Activated CD4-positive, alpha-beta T cell treated with anti-CD3 and anti-CD28 coated beads for 36 hours (primary cell): ENCODE measurements at regions of chr21 and their contacts with region 1.

Region 1: DNA sequence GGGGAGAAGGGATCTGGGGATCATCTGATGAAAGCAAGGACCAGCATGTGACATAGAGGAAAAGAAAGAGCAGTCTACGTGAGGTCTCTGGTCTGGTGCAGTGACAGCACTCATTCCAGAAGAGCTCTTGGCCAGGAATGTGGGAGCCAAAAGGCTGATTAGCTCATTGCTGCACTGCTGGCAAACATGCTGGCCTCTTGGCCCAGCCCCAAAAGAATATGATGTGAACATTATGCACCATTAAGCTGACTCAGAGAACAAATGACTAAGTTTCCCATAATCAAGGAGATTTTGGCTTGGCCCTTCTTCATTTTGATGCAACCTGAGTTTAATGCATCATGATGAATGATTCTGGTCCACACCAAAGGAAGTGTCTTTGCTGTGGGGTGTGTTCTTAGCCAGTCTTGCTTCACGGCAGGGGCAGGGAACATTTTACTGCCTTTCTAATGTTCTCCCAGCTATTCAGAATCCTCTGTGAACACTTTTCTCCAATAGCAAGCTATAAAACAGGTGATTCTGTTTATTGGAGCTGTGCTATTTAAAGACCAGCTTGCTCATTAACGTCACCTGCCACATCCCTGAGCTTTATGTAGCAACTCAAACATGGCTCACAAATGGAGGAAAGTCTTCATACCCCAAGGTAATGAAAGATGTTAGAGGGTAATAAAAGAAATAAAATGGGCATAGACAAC is 55.1 kb downstream of the PCBP3 start:
- DNase-seq: peak; percentile 61
- ATAC-seq: peak; percentile 84
- H3K4me3 Mint-ChIP-seq: no peak overlapping the region
- H3K27ac Mint-ChIP-seq: peak overlapping the region; percentile 83
- H3K4me1 Mint-ChIP-seq: peaks cover 34% of the 10 kb centered on the region
- H3K27me3 Mint-ChIP-seq: no peaks in the 10 kb centered on the region

Region 2: DNA sequence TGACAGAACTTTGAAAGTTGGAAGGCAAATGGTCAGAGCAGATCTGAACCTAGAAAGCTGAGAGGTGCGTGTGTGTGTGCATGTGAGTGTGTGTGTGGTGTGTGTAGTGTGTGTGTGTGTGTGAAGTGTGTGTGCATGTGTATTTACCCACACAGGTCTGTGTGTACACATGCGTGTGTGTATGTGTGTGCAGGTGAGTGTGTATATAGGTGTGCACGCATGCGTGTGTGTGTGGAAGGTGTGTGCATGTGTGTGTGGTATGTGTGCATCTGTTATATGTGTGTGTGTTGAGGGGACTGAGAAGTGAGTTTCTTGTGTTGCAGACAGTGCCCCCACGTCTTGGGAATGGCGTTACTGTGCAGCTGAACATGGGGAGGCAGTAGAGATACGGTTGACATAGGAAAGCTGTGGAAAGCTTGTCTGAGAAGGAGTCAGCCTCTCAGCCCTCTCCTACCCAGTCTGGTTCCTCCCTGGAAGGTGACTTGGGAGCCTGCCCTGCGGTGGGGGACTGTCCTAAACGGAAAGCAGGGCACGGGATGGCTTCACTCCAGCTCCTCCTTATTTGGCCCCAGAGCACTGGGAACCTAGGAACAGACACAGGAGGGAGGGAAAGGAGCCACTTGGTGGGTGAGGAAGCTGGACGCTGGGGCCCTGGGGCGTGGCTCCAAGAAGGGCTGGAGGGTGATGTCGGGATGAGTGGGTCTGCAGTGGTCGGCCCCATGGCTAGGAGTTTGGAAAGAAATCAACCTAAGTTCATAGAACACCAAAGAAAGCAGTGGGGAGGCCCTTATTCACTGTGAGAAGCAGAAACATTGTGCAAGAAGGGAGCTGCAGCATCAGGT is 42.1 kb after region 1 on chr21:
- CTCF ChIA-PET with region 1: no interaction called
- POLR2A ChIA-PET with region 1: no interaction called
- intact Hi-C with region 1: no loop called
- DNase-seq: no peak
- ATAC-seq: no peak
- H3K4me3 Mint-ChIP-seq: no peak overlapping the region
- H3K27ac Mint-ChIP-seq: no peak overlapping the region
- H3K4me1 Mint-ChIP-seq: peaks cover 15% of the 10 kb centered on the region
- H3K27me3 Mint-ChIP-seq: no peaks in the 10 kb centered on the region

Region 3: GRCh38 chr21:45768751-45769070 is 70.1 kb after region 1 on chr21:
- CTCF ChIA-PET with region 1: interaction called, 4 read pairs
- POLR2A ChIA-PET with region 1: no interaction called
- intact Hi-C with region 1: loop called (anchors 1 to 2 kb)
- DNase-seq: peak; percentile 64
- ATAC-seq: peak; percentile 3
- H3K4me3 Mint-ChIP-seq: peak overlapping the region; percentile 62
- H3K27ac Mint-ChIP-seq: peak overlapping the region; percentile 98
- H3K4me1 Mint-ChIP-seq: peaks cover 57% of the 10 kb centered on the region
- H3K27me3 Mint-ChIP-seq: no peaks in the 10 kb centered on the region

Region 4: DNA sequence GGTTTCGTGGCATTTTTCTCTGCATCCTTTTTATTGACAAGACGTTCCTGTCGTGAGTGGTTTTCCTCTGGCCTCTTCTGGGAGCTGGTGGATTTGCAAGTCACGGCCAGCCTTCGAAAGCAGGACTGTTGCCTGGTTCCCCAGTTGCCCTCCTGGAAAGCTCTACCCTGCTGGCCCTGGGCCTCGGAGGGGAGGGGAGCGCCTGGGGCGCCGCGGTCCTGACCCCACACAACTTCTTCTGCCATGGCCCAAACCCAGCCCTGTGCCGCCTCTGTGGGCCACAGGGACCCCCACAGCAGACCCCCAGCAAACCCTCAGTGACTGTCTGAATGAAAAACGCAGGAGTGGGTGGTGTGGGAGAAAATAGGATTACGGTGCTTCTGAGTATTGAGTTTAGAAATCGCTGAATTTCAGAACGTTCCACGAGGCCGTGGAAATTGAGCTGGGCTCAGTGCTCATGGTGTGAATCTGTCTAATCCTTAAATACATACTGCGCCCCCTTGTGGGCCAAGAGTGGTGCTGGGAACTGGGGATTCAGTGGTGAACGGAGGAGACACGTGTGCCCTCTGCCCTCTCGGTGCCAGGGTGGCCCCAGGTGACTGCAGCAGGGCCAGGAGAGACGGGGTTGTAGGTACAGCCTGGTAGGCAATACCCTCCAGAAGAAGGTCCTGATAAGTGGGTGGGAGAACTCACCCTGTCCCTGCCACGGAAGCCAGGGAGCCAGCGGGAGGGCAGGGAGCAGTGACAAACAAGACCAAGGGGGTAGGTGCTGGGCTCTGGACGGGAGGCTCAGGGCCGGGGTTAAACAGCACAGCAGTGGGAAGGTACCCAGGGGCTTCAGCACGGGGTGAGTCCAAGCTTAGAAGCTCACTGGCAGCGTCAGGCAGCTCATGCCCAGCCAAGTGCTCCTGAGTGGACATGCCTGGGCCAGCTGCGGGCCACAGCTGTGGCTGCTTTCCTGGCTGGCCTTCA is 181.7 kb after region 1 on chr21:
- CTCF ChIA-PET with region 1: interaction called, 4 read pairs
- POLR2A ChIA-PET with region 1: no interaction called
- intact Hi-C with region 1: loop called in 1 of 2 experiments (anchors 1 kb)
- DNase-seq: peak; percentile 90
- ATAC-seq: peak; percentile 96
- H3K4me3 Mint-ChIP-seq: no peak overlapping the region
- H3K27ac Mint-ChIP-seq: peak overlapping the region; percentile 73
- H3K4me1 Mint-ChIP-seq: peaks cover 55% of the 10 kb centered on the region
- H3K27me3 Mint-ChIP-seq: no peaks in the 10 kb centered on the region

Region 5: DNA sequence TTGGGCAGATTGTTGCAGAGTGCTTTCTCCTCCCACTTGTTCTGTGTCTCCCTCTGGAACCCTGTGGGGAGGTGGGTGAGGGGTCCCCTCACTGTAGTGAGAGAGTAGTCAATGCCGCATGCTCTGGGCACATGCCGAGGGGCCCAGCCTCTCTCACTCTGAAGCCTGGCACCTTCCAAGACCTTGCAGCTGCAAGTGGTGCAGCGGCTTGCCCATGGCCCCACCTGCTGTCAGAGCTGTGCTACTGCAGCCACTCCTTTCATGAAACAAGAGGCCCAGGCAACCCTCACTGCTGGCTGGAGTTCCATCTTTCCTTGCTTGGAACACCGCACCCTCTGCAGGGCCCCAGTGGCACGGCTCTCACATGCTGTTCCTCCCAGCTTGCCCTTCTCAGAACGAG is 224.5 kb after region 1 on chr21:
- CTCF ChIA-PET with region 1: no interaction called
- POLR2A ChIA-PET with region 1: no interaction called
- intact Hi-C with region 1: loop called in 1 of 2 experiments (anchors 5 kb)
- DNase-seq: peak; percentile 82
- ATAC-seq: peak; percentile 85
- H3K4me3 Mint-ChIP-seq: no peak overlapping the region
- H3K27ac Mint-ChIP-seq: no peak overlapping the region
- H3K4me1 Mint-ChIP-seq: peaks cover 12% of the 10 kb centered on the region
- H3K27me3 Mint-ChIP-seq: no peaks in the 10 kb centered on the region